ENCODE measurements at regions of chr5 and their contacts with region 1.

Region 1: GRCh38 chr5:136249678-136250266 is 56.8 kb upstream of the SMIM32 start:
- DNase-seq: peak; percentile 75
- H3K4me3 Mint-ChIP-seq: no peak overlapping the region
- H3K27ac Mint-ChIP-seq: no peak overlapping the region
- H3K4me1 Mint-ChIP-seq: peaks cover 11% of the 10 kb centered on the region
- H3K27me3 Mint-ChIP-seq: peaks cover 41% of the 10 kb centered on the region
- CTCF ChIP-seq: peak; percentile 99

Region 2: DNA sequence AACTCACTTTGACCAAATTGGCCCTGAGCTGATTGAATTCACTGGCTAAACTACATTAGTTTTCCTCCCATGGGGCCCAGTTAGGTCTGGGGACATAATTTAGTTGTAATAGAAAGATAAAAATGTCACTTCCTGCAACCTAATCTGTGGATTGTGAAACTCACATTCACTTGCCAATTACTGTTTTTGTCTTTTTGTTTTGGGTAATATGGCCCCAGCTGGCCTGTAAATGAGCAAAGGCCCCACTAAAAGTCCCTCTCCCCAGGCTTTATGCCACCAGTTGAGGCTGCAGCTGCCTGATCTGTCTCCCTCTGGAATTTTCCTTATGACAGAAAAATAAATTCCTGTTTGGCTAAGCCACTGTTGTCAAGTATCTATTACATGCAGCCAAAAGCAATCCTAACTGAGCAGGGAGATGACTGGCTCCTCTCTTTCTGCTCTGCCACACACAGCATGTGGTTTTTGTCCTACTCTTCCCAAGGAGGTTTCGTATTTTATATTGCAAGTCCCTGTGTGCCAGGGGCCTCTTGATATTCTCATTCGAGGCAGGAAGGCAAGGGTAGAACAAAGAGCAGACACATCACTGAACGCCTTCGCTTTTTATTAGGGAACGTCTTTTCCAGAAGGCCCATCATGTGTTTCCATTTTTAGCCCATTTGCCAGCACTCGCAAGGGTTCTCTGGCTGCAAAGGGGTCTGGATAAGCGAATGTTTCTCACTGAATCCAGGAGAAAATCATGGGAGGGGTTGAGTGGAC is 439.4 kb before region 1 on chr5:
- CTCF ChIA-PET with region 1: no interaction called
- POLR2A ChIA-PET with region 1: no interaction called
- intact Hi-C with region 1: no loop called
- DNase-seq: no peak
- H3K4me3 Mint-ChIP-seq: no peak overlapping the region
- H3K27ac Mint-ChIP-seq: no peak overlapping the region
- H3K4me1 Mint-ChIP-seq: no peaks in the 10 kb centered on the region
- H3K27me3 Mint-ChIP-seq: peaks cover 33% of the 10 kb centered on the region
- CTCF ChIP-seq: no peak

Region 3: DNA sequence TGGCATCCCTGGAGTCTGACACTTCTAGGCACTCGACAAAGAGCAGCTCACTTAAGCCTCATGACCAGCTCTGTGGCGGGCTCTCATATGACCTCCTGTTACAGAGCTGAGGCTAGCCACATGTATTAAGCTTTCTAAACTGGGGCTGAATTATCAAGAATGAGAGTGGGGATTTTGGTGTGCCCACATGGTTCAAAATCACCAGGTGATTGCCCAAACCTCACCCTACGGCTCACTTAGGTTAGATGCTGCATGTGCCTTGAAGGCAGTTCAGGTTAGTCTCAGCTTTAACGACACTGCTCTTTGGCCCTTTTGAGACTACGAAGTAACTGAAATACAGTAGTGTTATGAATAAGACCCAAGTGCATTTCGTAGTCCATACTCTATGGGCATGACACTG is 17.5 kb before region 1 on chr5:
- CTCF ChIA-PET with region 1: interaction called, 87 read pairs
- POLR2A ChIA-PET with region 1: no interaction called
- intact Hi-C with region 1: no loop called
- DNase-seq: no peak
- H3K4me3 Mint-ChIP-seq: no peak overlapping the region
- H3K27ac Mint-ChIP-seq: no peak overlapping the region
- H3K4me1 Mint-ChIP-seq: no peaks in the 10 kb centered on the region
- H3K27me3 Mint-ChIP-seq: peaks cover 40% of the 10 kb centered on the region
- CTCF ChIP-seq: no peak

Region 4: GRCh38 chr5:136276946-136277345 is 27.2 kb after region 1 on chr5:
- CTCF ChIA-PET with region 1: interaction called, 36 read pairs
- POLR2A ChIA-PET with region 1: no interaction called
- intact Hi-C with region 1: no loop called
- DNase-seq: peak; percentile 37
- H3K4me3 Mint-ChIP-seq: no peak overlapping the region
- H3K27ac Mint-ChIP-seq: no peak overlapping the region
- H3K4me1 Mint-ChIP-seq: no peaks in the 10 kb centered on the region
- H3K27me3 Mint-ChIP-seq: peaks cover 53% of the 10 kb centered on the region
- CTCF ChIP-seq: no peak

Region 5: GRCh38 chr5:136374003-136374402 is 124.2 kb after region 1 on chr5:
- CTCF ChIA-PET with region 1: interaction called, 5 read pairs
- POLR2A ChIA-PET with region 1: no interaction called
- intact Hi-C with region 1: loop called (anchors 5 kb)
- DNase-seq: peak; percentile 62
- H3K4me3 Mint-ChIP-seq: no peak overlapping the region
- H3K27ac Mint-ChIP-seq: no peak overlapping the region
- H3K4me1 Mint-ChIP-seq: no peaks in the 10 kb centered on the region
- H3K27me3 Mint-ChIP-seq: peaks cover 50% of the 10 kb centered on the region
- CTCF ChIP-seq: peak; percentile 23

Region 6: GRCh38 chr5:136686192-136686872 is 436.6 kb after region 1 on chr5:
- CTCF ChIA-PET with region 1: interaction called, 37 read pairs
- POLR2A ChIA-PET with region 1: interaction called, 3 read pairs
- intact Hi-C with region 1: loop called (anchors 1 kb)
- DNase-seq: peak; percentile 55
- H3K4me3 Mint-ChIP-seq: no peak overlapping the region
- H3K27ac Mint-ChIP-seq: no peak overlapping the region
- H3K4me1 Mint-ChIP-seq: no peaks in the 10 kb centered on the region
- H3K27me3 Mint-ChIP-seq: no peaks in the 10 kb centered on the region
- CTCF ChIP-seq: peak; percentile 56

Region 7: DNA sequence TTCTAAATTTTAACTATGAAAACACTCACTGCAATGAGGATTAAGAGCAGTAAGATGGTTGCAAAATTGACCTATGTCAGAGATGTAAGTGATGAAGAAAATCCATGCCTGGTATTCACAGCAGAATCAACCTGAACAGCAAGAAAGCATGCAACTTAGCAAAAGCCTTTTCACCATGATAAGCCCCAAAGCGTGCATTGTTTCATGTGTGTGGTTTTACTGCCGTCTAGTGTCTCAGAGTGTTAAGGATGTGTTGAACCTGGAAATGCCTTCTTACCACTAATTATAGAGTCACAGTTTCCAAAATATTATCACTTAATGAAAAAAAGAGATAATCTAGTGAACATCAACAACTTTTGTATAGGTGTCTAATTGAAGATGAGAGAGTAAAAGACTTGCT is 530.8 kb after region 1 on chr5:
- CTCF ChIA-PET with region 1: interaction called, 11 read pairs
- POLR2A ChIA-PET with region 1: no interaction called
- intact Hi-C with region 1: no loop called
- DNase-seq: peak; percentile 21
- H3K4me3 Mint-ChIP-seq: no peak overlapping the region
- H3K27ac Mint-ChIP-seq: no peak overlapping the region
- H3K4me1 Mint-ChIP-seq: no peaks in the 10 kb centered on the region
- H3K27me3 Mint-ChIP-seq: peaks cover 51% of the 10 kb centered on the region
- CTCF ChIP-seq: no peak